Heart right ventricle (tissue), 16 donors: ENCODE measurements at regions of chr3 and their contacts with region 1.

Region 1: GRCh38 chr3:60542995-60543394 is 708.3 kb downstream of the FHIT start:
- DNase-seq: no peak
- ATAC-seq: no peak
- H3K4me3 ChIP-seq: no peak overlapping the region
- H3K27ac ChIP-seq: no peak overlapping the region
- H3K4me1 ChIP-seq: no peaks in the 10 kb centered on the region
- H3K27me3 ChIP-seq: no peaks in the 10 kb centered on the region
- CTCF ChIP-seq: no peak

Region 2: GRCh38 chr3:59771768-59772181 is 771.2 kb before region 1 on chr3:
- intact Hi-C with region 1: no loop called
- DNase-seq: no peak
- ATAC-seq: no peak
- H3K4me3 ChIP-seq: no peak overlapping the region
- H3K27ac ChIP-seq: no peak overlapping the region
- H3K4me1 ChIP-seq: peaks cover 0 to 12% (median 0%) of the 10 kb centered on the region in 9 donors
- H3K27me3 ChIP-seq: no peaks in the 10 kb centered on the region
- CTCF ChIP-seq: no peak

Region 3: DNA sequence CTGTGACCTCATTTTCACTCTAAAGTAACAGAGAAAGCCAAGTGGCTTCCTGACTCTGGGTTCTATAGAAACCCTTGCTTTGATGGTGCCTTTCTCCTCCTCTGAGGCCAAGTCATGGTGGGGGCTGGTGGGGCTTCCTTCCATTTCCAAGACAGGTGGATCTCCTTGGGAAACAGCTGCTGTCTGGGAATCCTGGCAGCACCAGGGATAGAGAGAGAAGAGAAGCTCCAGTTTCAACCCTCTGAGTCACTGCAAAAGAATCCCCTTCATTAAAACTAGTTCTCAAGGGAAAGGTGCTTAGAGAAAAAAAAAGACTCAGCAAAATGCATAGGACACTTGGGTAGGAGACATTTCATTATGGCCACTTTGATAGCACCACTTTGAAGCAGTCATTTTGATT is 93.9 kb after region 1 on chr3:
- intact Hi-C with region 1: no loop called
- DNase-seq: no peak
- ATAC-seq: no peak
- H3K4me3 ChIP-seq: no peak overlapping the region
- H3K27ac ChIP-seq: no peak overlapping the region
- H3K4me1 ChIP-seq: no peaks in the 10 kb centered on the region
- H3K27me3 ChIP-seq: no peaks in the 10 kb centered on the region
- CTCF ChIP-seq: no peak

Region 4: GRCh38 chr3:61520966-61521628 is 978.1 kb after region 1 on chr3:
- intact Hi-C with region 1: loop called in 1 of 10 experiments (anchors 10 kb)
- DNase-seq: no peak
- ATAC-seq: no peak
- H3K4me3 ChIP-seq: no peak overlapping the region
- H3K27ac ChIP-seq: no peak overlapping the region
- H3K4me1 ChIP-seq: peaks cover 0 to 23% (median 4%) of the 10 kb centered on the region in 9 donors
- H3K27me3 ChIP-seq: no peaks in the 10 kb centered on the region
- CTCF ChIP-seq: no peak